GM23248 (cell line): ENCODE measurements at regions of chr17 and their contacts with region 1.

Region 1: GRCh38 chr17:6927290-6928126 is 68.3 kb upstream of the ALOX12 start:
- DNase-seq: peak; percentile 77
- H3K4me3 ChIP-seq: peak overlapping the region; percentile 24; the same call in 1 of the 2 replicates
- H3K27ac ChIP-seq: peak overlapping the region; percentile 68
- H3K4me1 ChIP-seq: peaks cover 25% of the 10 kb centered on the region
- H3K27me3 ChIP-seq: no peaks in the 10 kb centered on the region

Region 2: GRCh38 chr17:6120351-6120750 is 807.2 kb before region 1 on chr17:
- in situ Hi-C with region 1: no loop called
- DNase-seq: no peak
- H3K4me3 ChIP-seq: no peak overlapping the region
- H3K27ac ChIP-seq: no peak overlapping the region
- H3K4me1 ChIP-seq: no peaks in the 10 kb centered on the region
- H3K27me3 ChIP-seq: no peaks in the 10 kb centered on the region

Region 3: DNA sequence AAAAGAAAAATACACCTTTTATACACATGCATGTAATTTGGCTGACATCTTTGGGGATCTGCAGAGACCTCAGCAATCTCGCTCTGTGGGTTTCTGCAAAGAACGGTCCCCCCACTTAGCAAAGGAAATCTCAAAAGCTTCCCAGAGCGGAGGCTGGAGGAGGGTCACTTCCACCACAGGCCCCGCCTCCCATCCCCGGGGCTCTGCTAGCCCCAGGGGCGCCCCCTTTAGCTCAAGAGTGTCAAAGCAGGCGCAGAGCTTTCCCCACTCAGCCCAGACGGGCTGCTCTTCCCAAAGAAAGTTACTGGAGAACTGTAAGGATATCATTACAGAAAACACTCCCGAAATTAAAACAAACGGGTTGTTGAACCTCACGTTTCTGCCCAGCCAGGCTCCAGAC is 225.8 kb before region 1 on chr17:
- in situ Hi-C with region 1: no loop called
- DNase-seq: peak; percentile 64
- H3K4me3 ChIP-seq: no peak overlapping the region
- H3K27ac ChIP-seq: no peak overlapping the region
- H3K4me1 ChIP-seq: no peaks in the 10 kb centered on the region
- H3K27me3 ChIP-seq: peaks cover 1% of the 10 kb centered on the region; the same call in 1 of the 2 replicates

Region 4: GRCh38 chr17:6981426-6981825 is 53.9 kb after region 1 on chr17:
- in situ Hi-C with region 1: loop called (anchors 10 kb)
- DNase-seq: no peak
- H3K4me3 ChIP-seq: no peak overlapping the region
- H3K27ac ChIP-seq: no peak overlapping the region
- H3K4me1 ChIP-seq: no peaks in the 10 kb centered on the region
- H3K27me3 ChIP-seq: no peaks in the 10 kb centered on the region